Breast epithelium (tissue), 4 donors: ENCODE measurements at regions of chr14 and their contacts with region 1.

Region 1: DNA sequence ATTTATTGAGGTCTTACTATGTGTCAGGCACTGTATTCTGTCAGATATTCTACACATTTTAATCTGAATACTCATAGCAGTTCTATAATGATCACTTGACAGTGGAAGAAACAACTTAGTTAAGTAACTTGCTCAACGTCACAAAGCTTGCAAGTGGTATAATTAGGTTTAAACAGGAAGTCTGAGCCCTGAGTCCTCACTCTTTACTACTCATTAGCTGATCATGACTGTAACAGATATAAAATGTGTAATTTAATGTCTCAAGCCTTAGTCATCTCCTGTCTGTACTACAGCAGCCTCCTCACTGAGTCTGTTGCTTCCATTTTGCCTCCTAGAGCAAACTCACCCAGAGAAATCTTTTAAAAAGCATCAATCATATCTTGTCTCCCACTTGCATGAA is 38.9 kb downstream of the PPP4R4 start:
- DNase-seq: no peak
- H3K4me3 ChIP-seq: no peak overlapping the region
- H3K27ac ChIP-seq: no peak overlapping the region
- H3K4me1 ChIP-seq: no peaks in the 10 kb centered on the region
- H3K27me3 ChIP-seq: no peaks in the 10 kb centered on the region
- CTCF ChIP-seq: no peak
- POLR2A ChIP-seq: no peak

Region 2: GRCh38 chr14:94144765-94145164 is 68.3 kb before region 1 on chr14:
- intact Hi-C with region 1: loop called (anchors 5 kb)
- DNase-seq: no peak
- H3K4me3 ChIP-seq: no peak overlapping the region
- H3K27ac ChIP-seq: no peak overlapping the region
- H3K4me1 ChIP-seq: no peaks in the 10 kb centered on the region
- H3K27me3 ChIP-seq: no peaks in the 10 kb centered on the region
- CTCF ChIP-seq: no peak
- POLR2A ChIP-seq: no peak

Region 3: DNA sequence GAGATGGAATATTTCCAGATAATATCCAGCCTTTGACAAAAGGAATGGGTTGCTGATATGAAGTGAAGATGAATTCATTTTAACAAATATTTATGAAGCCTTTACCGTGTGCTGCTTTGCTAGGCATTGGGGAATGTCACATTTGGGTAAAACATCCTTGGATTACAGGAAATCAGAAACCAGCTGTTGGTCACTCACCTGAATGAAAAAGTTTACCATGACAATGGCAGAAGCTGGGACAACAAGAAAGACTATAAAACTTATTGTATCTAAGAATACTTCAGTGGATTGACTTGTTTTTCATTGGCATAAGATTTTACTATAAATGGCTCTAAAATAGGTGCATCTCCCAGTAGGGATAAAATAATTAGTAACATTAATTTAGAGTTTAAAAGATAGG is 19.2 kb before region 1 on chr14:
- intact Hi-C with region 1: no loop called
- DNase-seq: no peak
- H3K4me3 ChIP-seq: no peak overlapping the region
- H3K27ac ChIP-seq: no peak overlapping the region
- H3K4me1 ChIP-seq: no peaks in the 10 kb centered on the region
- H3K27me3 ChIP-seq: no peaks in the 10 kb centered on the region
- CTCF ChIP-seq: no peak
- POLR2A ChIP-seq: no peak

Region 4: GRCh38 chr14:94401083-94401482 is 188.1 kb after region 1 on chr14:
- intact Hi-C with region 1: no loop called
- DNase-seq: no peak
- H3K4me3 ChIP-seq: no peak overlapping the region
- H3K27ac ChIP-seq: no peak overlapping the region
- H3K4me1 ChIP-seq: no peaks in the 10 kb centered on the region
- H3K27me3 ChIP-seq: no peaks in the 10 kb centered on the region
- CTCF ChIP-seq: no peak
- POLR2A ChIP-seq: no peak